Right ventricle myocardium inferior (tissue), 1 donor: ENCODE measurements at regions of chr1 and their contacts with region 1.

Region 1: GRCh38 chr1:177256153-177257075 is 85.7 kb downstream of the BRINP2 start:
- DNase-seq: no peak
- ATAC-seq: peak; percentile 81

Region 2: GRCh38 chr1:177007437-177008161 is 248.8 kb before region 1 on chr1:
- intact Hi-C with region 1: no loop called
- DNase-seq: no peak
- ATAC-seq: peak; percentile 84

Region 3: GRCh38 chr1:177355595-177355994 is 99.2 kb after region 1 on chr1:
- intact Hi-C with region 1: loop called (anchors 1 kb)
- DNase-seq: no peak
- ATAC-seq: no peak

Region 4: DNA sequence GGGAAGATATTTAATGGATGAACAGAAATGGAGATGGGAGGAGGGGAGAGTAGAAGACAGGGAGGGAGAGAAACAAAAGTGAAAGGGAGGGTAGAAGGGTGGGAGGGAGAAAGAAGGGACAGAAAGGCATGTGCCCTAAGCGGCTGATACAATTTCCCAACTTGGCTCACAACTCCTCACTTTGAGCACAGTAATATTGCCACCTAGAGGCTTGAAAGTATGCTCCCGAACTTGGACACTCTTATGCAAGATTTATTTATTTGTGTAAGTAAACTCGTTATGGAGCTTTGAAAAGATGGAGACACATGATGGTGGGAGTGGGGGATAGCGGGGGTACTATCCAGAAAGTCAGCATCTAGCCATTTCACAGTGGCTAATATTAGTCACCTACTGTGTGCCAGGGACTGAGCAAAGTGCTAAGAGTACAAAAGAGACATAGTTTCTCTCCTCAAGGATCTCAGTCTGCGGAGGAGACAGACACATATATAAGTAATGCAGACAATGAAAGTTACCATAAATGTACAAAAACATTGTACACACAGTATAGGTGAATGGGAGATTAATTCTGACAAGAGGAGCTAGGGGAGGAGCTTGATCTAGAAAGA is 523.8 kb after region 1 on chr1:
- intact Hi-C with region 1: loop called (anchors 5 kb)
- DNase-seq: no peak
- ATAC-seq: peak; percentile 44

Region 5: GRCh38 chr1:177948336-177948972 is 692.0 kb after region 1 on chr1:
- intact Hi-C with region 1: loop called (anchors 10 kb)
- DNase-seq: no peak
- ATAC-seq: peak; percentile 64